ENCODE measurements at regions of chr2 and their contacts with region 1.

Region 1: GRCh38 chr2:144426981-144427479 is 92.9 kb downstream of the ZEB2 start:
- DNase-seq: no peak
- ATAC-seq: peak; percentile 61

Region 2: GRCh38 chr2:144402251-144402650 is 24.8 kb before region 1 on chr2:
- intact Hi-C with region 1: loop called (anchors 2 kb)
- DNase-seq: peak; percentile 79
- ATAC-seq: peak; percentile 9

Measured in Right ventricle myocardium inferior (tissue), 1 donor.